Activated naive CD4-positive, alpha-beta T cell treated with anti-CD3 and anti-CD28 coated beads for 36 hours (primary cell): ENCODE measurements at regions of chr1 and their contacts with region 1.

Region 1: GRCh38 chr1:213761845-213762407 is 225.8 kb upstream of the PROX1 start:
- DNase-seq: peak; percentile 81
- H3K4me3 Mint-ChIP-seq: peak overlapping the region; percentile 22
- H3K27ac Mint-ChIP-seq: peak overlapping the region; percentile 83
- H3K4me1 Mint-ChIP-seq: peaks cover 17% of the 10 kb centered on the region
- H3K27me3 Mint-ChIP-seq: no peaks in the 10 kb centered on the region

Region 2: DNA sequence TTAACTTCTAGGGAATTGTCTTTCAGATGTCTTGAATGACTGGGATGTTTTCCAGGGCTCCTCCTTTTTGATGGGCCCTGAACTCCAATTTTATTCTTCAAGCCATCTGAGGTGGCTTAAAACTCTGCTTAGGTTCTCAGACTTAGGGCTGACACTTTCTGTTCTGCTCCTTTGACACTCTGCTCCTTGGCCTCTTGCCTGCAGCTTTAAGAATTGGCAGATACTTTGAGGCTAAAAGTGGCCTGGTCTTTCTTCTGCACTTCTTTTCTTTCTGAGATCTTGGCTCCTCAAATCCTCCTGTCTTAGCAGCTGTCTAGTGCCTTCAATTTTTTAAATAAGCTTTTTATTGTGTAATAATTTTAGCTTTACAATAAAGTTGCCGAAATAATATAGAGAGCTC is 416.3 kb before region 1 on chr1:
- CTCF ChIA-PET with region 1: no interaction called
- intact Hi-C with region 1: no loop called
- DNase-seq: no peak
- H3K4me3 Mint-ChIP-seq: no peak overlapping the region
- H3K27ac Mint-ChIP-seq: no peak overlapping the region
- H3K4me1 Mint-ChIP-seq: no peaks in the 10 kb centered on the region
- H3K27me3 Mint-ChIP-seq: peaks cover 11% of the 10 kb centered on the region

Region 3: GRCh38 chr1:213649373-213649772 is 112.6 kb before region 1 on chr1:
- CTCF ChIA-PET with region 1: no interaction called
- intact Hi-C with region 1: no loop called
- DNase-seq: no peak
- H3K4me3 Mint-ChIP-seq: no peak overlapping the region
- H3K27ac Mint-ChIP-seq: no peak overlapping the region
- H3K4me1 Mint-ChIP-seq: no peaks in the 10 kb centered on the region
- H3K27me3 Mint-ChIP-seq: peaks cover 9% of the 10 kb centered on the region

Region 4: DNA sequence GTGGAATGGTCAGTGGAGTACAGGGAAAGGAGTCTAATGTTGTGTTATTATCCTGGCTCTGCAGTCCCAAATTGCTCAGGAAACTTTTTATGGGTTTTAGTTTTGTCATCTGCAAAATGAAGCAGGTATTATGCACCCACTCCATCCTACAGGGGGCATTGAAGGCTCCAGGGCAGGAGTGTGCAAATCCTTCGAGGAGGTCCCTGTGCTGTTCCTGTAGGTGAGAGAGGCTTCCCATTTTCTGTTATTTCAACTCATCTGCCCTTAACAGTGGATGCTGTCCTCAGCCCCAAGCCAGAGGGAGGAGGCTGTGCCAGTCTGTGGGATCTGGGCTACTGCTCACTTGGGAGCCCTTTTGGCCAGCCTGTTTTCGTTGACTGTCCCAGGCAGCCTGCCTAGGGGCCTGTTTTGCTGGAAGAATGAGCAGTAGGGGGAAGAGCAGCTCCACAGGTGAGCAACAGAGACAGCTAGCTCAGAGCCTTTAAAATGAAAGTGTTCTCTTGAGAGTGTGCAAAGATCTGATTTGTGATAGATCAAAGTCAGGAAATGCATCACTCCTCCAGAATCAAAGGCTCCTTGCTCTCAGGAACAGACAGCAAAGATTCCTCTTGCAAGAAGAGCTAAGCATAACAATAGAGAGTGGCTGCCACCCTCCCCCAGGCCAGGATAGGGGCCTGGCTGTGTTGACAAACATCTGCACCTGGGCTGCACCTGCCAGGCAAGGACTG is 91.8 kb before region 1 on chr1:
- CTCF ChIA-PET with region 1: no interaction called
- intact Hi-C with region 1: loop called (anchors 5 kb)
- DNase-seq: peak; percentile 49
- H3K4me3 Mint-ChIP-seq: no peak overlapping the region
- H3K27ac Mint-ChIP-seq: no peak overlapping the region
- H3K4me1 Mint-ChIP-seq: peaks cover 14% of the 10 kb centered on the region
- H3K27me3 Mint-ChIP-seq: no peaks in the 10 kb centered on the region

Region 5: DNA sequence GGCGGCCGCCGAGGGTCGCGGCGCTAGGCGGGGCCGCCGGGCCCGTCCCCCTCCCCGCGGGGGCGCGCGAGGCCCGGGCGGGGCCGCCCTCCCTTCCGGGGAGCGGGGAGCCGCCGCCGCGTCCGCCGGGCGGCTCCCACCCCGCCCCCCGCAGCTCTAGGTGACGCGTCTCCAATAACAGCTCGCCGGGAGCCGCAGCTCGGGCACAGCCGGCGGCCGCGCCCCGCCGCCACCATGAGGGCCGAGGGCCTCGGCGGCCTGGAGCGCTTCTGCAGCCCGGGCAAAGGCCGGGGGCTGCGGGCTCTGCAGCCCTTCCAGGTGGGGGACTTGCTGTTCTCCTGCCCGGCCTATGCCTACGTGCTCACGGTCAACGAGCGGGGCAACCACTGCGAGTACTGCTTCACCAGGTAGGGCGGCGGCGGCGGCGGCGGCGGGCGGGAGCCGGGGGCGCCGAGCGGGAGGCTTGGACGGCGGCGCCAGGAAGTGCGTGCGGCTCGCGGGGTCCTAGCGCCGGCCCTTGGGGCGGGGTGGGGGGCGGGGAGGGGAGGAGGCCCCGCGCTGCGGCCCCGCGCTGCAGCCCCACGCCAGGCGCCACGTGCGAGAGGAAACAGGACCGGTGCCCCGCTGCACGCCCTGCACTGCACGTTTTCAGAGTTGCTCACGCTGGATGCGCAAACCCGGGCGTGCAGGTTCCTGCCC is 519.2 kb after region 1 on chr1 and contains the start of gene SMYD2:
- CTCF ChIA-PET with region 1: no interaction called
- intact Hi-C with region 1: loop called (anchors 2 kb)
- DNase-seq: peak; percentile 66
- H3K4me3 Mint-ChIP-seq: peak within 1 kb of the TSS; percentile 87
- H3K27ac Mint-ChIP-seq: peak within 1 kb of the TSS; percentile 74
- H3K4me1 Mint-ChIP-seq: peaks cover 40% of the 10 kb centered on the region
- H3K27me3 Mint-ChIP-seq: no peaks in the 10 kb centered on the region
- total RNA-seq, gene SMYD2: 33.4 to 38.4 TPM